ENCODE measurements at regions of chr13 and their contacts with region 1.

Region 1: DNA sequence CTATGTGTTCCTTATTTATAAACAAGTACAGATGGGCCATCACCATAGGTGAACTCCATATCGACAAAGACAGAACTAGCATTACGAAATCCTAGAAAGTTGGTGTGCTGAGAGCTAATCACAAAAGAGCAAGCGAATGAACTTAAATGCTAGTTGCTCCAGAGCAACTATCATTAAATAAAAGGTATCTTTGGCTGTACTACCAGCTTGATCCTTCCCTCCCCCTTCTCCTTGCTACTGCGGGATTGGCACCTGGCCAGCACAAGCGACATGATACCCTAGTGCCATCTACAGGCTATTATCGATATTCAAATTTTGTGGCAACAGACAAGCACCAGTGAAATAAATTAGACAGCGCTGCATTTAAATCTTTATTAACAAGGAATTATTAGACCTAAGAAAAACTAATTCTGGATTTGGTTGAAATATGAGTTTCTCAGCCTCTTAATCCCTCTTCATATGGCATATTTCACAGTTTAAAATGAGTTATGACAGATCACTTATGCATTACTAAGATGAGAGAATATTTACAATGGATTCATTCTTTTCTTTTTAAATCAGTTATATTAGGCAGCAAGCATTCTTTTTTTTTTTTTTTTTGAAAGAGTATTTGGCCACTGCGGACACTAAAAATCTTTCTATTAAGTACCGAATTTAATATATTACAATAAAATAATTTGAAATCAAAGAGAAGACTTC is 5.8 kb downstream of the PCDH9 start:
- DNase-seq: peak; percentile 69
- ATAC-seq: peak; percentile 66
- H3K4me3 ChIP-seq: peak overlapping the region; percentile 54
- H3K27ac ChIP-seq: peak overlapping the region; percentile 58
- H3K4me1 ChIP-seq: peaks cover 13% of the 10 kb centered on the region
- H3K27me3 ChIP-seq: no peaks in the 10 kb centered on the region
- CTCF ChIP-seq: peak; percentile 69

Region 2: DNA sequence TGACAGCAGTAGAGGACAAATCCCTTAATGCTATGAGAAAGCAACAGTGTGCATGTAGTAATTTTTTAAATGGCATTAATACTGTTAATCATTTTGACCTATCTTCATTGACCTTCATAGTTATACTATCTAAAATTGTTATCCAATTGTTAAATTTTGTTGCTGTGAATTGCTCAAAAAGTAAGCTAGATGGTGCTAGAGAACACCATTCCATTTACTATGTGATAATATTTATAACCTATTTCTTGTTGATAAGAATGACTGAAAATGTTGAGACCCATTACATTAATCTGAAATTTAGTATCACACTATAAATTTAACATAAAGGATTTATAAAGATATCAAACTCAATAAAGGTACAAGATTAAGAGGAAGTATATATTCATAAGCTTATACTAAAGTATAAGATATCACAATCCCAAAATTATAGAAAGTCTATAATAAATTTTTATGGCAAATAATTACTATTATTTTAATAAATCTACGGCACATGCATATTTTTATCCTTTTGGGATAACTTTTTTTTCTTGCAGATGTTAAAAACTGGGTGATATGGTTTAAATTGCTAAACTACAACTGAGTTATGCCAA is 1567.5 kb before region 1 on chr13:
- CTCF ChIA-PET with region 1: no interaction called
- POLR2A ChIA-PET with region 1: no interaction called
- intact Hi-C with region 1: loop called (anchors 1 kb)
- DNase-seq: peak; percentile 37
- ATAC-seq: no peak
- H3K4me3 ChIP-seq: no peak overlapping the region
- H3K27ac ChIP-seq: no peak overlapping the region
- H3K4me1 ChIP-seq: no peaks in the 10 kb centered on the region
- H3K27me3 ChIP-seq: no peaks in the 10 kb centered on the region
- CTCF ChIP-seq: peak; percentile 65

Region 3: GRCh38 chr13:66048888-66049287 is 1175.4 kb before region 1 on chr13:
- CTCF ChIA-PET with region 1: no interaction called
- POLR2A ChIA-PET with region 1: no interaction called
- intact Hi-C with region 1: no loop called
- DNase-seq: no peak
- ATAC-seq: no peak
- H3K4me3 ChIP-seq: no peak overlapping the region
- H3K27ac ChIP-seq: no peak overlapping the region
- H3K4me1 ChIP-seq: no peaks in the 10 kb centered on the region
- H3K27me3 ChIP-seq: no peaks in the 10 kb centered on the region
- CTCF ChIP-seq: no peak

Region 4: DNA sequence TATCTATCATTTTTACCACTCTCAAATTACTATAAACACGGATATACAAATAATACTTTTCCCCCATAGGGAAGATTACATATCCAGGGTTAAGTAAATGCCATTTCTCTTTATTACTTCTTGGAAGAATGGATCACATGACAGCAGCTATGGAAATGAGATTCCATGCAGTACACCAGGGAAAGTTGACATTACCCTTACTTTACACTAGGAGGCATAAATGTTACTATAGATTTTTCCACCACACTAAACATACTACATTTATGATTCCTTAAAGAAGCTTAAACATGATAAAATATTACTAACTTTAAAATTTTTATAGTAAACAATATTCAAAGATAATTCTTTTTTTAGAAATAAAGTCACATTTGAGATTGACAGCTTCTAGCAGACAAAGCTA is 605.6 kb before region 1 on chr13:
- CTCF ChIA-PET with region 1: no interaction called
- POLR2A ChIA-PET with region 1: no interaction called
- intact Hi-C with region 1: loop called (anchors 5 kb)
- DNase-seq: peak; percentile 50
- ATAC-seq: peak; percentile 73
- H3K4me3 ChIP-seq: no peak overlapping the region
- H3K27ac ChIP-seq: no peak overlapping the region
- H3K4me1 ChIP-seq: no peaks in the 10 kb centered on the region
- H3K27me3 ChIP-seq: no peaks in the 10 kb centered on the region
- CTCF ChIP-seq: peak; percentile 46

Region 5: GRCh38 chr13:66689628-66690027 is 534.7 kb before region 1 on chr13:
- CTCF ChIA-PET with region 1: no interaction called
- POLR2A ChIA-PET with region 1: no interaction called
- intact Hi-C with region 1: loop called (anchors 1 kb)
- DNase-seq: peak; percentile 25
- ATAC-seq: peak; percentile 56
- H3K4me3 ChIP-seq: no peak overlapping the region
- H3K27ac ChIP-seq: no peak overlapping the region
- H3K4me1 ChIP-seq: no peaks in the 10 kb centered on the region
- H3K27me3 ChIP-seq: no peaks in the 10 kb centered on the region
- CTCF ChIP-seq: peak; percentile 35; the same call in 1 of the 2 replicates

Region 6: GRCh38 chr13:66994097-66994496 is 230.2 kb before region 1 on chr13:
- CTCF ChIA-PET with region 1: no interaction called
- POLR2A ChIA-PET with region 1: no interaction called
- intact Hi-C with region 1: loop called (anchors 10 kb)
- DNase-seq: no peak
- ATAC-seq: no peak
- H3K4me3 ChIP-seq: no peak overlapping the region
- H3K27ac ChIP-seq: no peak overlapping the region
- H3K4me1 ChIP-seq: no peaks in the 10 kb centered on the region
- H3K27me3 ChIP-seq: no peaks in the 10 kb centered on the region
- CTCF ChIP-seq: no peak

Region 7: GRCh38 chr13:67075239-67075638 is 149.1 kb before region 1 on chr13:
- CTCF ChIA-PET with region 1: no interaction called
- POLR2A ChIA-PET with region 1: no interaction called
- intact Hi-C with region 1: loop called (anchors 2 kb)
- DNase-seq: peak; percentile 1
- ATAC-seq: no peak
- H3K4me3 ChIP-seq: no peak overlapping the region
- H3K27ac ChIP-seq: no peak overlapping the region
- H3K4me1 ChIP-seq: no peaks in the 10 kb centered on the region
- H3K27me3 ChIP-seq: no peaks in the 10 kb centered on the region
- CTCF ChIP-seq: peak; percentile 29; the same call in 1 of the 2 replicates

Region 8: GRCh38 chr13:67119481-67119883 is 104.8 kb before region 1 on chr13:
- CTCF ChIA-PET with region 1: no interaction called
- POLR2A ChIA-PET with region 1: no interaction called
- intact Hi-C with region 1: loop called (anchors 5 kb)
- DNase-seq: peak; percentile 79
- ATAC-seq: peak; percentile 89
- H3K4me3 ChIP-seq: no peak overlapping the region
- H3K27ac ChIP-seq: peak overlapping the region; percentile 53; the same call in 1 of the 2 replicates
- H3K4me1 ChIP-seq: peaks cover 27% of the 10 kb centered on the region
- H3K27me3 ChIP-seq: no peaks in the 10 kb centered on the region
- CTCF ChIP-seq: no peak

Region 9: GRCh38 chr13:67130444-67130843 is 93.9 kb before region 1 on chr13:
- CTCF ChIA-PET with region 1: no interaction called
- POLR2A ChIA-PET with region 1: no interaction called
- intact Hi-C with region 1: no loop called
- DNase-seq: no peak
- ATAC-seq: no peak
- H3K4me3 ChIP-seq: no peak overlapping the region
- H3K27ac ChIP-seq: no peak overlapping the region
- H3K4me1 ChIP-seq: no peaks in the 10 kb centered on the region
- H3K27me3 ChIP-seq: no peaks in the 10 kb centered on the region
- CTCF ChIP-seq: no peak

Region 10: GRCh38 chr13:67175836-67176459 is 48.3 kb before region 1 on chr13:
- CTCF ChIA-PET with region 1: no interaction called
- POLR2A ChIA-PET with region 1: no interaction called
- intact Hi-C with region 1: no loop called
- DNase-seq: no peak
- ATAC-seq: no peak
- H3K4me3 ChIP-seq: no peak overlapping the region
- H3K27ac ChIP-seq: no peak overlapping the region
- H3K4me1 ChIP-seq: no peaks in the 10 kb centered on the region
- H3K27me3 ChIP-seq: no peaks in the 10 kb centered on the region
- CTCF ChIP-seq: no peak